BJ (cell line): ENCODE measurements at regions of chr12 and their contacts with region 1.

Region 1: DNA sequence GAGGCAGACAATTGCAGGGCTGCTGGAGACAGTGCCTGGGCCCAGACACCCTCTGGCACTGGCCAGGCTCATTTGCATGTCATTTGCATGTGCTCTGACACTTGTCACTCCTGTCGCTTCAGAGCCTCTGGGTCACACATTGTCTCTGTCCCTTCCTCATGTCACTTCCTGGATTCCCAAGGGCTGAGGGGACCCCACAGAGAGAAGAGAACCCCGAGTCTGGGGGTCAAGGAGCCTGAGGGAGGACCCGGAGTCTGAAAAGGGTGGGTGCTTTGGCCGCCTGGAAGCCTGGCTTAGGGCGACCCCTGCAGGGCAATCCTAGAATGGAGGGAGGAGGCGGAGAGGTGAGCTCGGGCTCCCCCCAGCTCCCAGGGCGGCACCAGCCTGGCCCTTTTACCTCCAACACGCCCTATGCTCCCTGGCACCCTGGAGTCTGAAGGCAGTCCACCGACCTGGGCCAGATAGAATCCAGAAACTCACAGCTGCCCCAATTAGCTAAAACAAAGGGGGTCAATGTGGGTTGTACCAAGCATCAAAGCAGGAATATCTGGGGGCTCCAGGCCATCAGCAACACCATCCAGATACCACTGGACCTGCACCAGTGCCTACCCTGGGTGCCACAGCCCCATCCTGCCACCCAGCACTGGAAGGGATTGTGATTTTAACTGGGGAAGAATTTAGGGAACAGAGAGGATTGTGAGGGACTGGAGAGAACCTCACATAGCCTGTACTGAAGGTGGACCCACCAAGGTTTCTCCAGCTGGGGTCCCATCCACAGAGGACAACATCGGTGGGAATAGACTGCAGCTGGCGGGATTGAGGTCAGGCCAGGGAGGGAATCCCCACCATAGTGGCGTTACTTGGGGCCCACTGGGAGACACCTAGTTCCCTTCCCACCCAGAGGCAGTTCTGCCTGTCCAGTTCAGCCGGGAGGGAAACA is 21.8 kb upstream of the KRT78 start:
- DNase-seq: no peak
- H3K4me3 ChIP-seq: no peak overlapping the region
- H3K27me3 ChIP-seq: no peaks in the 10 kb centered on the region
- CTCF ChIP-seq: peak; percentile 75

Region 2: GRCh38 chr12:52582971-52583456 is 287.6 kb before region 1 on chr12:
- CTCF ChIA-PET with region 1: interaction called, 283 read pairs
- POLR2A ChIA-PET with region 1: no interaction called
- DNase-seq: no peak
- H3K4me3 ChIP-seq: no peak overlapping the region
- H3K27me3 ChIP-seq: peaks cover 16% of the 10 kb centered on the region
- CTCF ChIP-seq: peak; percentile 76